IMR-90 (cell line): ENCODE measurements at regions of chr17 and their contacts with region 1.

Region 1: DNA sequence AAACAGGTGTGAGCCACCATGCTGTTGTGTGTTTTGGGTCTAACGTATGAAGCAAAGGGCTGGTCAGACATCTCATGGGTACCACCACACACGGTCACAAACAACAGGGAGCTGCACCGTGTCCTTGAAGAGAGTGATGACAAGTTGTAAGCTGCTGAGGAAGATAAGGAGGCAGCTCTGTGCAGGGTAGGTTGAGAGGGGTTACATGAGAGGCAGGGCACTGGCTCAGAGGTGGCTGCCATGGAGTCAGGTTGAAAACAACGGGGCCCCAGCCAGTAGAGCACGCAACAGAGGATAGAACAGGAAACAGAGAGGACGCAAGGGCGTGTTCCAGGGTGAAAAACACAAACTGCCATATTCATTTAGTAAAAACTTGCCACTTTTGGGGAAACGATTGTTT is 52.2 kb downstream of the TRARG1 start:
- DNase-seq: no peak
- ATAC-seq: no peak
- H3K4me3 ChIP-seq: no peak overlapping the region
- H3K27ac ChIP-seq: no peak overlapping the region
- H3K4me1 ChIP-seq: no peaks in the 10 kb centered on the region
- H3K27me3 ChIP-seq: no peaks in the 10 kb centered on the region
- CTCF ChIP-seq: no peak
- POLR2A ChIP-seq: no peak
- RAD21 ChIP-seq: no peak

Region 2: DNA sequence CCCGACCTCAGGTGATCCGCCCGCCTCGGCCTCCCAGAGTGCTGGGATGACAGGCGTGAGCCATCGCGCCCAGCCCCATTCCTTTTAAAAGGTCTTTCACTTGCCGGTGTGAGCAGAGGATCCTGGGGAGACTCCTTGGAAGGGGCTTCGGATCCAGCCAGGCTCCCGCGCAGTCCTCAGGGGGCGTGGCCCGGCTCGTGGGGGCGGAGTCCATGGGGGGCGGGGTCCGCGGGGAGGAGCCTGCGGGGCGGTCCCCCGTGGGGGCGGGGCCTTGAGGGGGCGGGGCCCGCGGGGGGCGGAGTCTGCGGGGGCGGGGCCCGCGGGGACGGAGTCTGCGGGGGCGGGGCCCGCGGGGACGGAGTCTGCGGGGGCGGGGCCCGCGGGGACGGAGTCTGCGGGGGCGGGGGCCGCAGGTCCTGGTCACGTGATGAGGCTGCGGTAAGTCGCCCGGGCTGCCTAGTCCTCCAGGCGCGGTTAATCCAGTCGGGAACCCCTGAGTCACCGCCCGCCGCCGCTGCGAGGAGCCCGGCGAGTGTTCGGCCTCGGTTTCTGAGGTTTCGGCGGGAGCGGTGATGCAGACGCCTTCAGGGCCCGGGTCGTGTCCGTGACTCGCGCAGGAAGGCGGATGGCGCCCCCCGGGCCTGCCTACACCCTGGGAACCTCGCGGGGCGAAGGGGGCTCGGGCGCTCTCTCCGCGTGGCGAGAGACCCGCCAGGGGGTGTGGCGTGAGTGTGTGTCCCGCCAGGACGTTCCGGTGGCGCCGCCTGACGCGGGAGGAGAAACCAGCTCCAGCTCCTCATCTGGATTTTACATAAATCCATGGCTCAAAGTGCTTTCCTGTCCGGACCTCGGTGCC is 128.4 kb before region 1 on chr17:
- CTCF ChIA-PET with region 1: no interaction called
- POLR2A ChIA-PET with region 1: no interaction called
- dilution Hi-C with region 1: no loop called
- in situ Hi-C with region 1: no loop called
- intact Hi-C with region 1: loop called (anchors 5 kb)
- DNase-seq: peak; percentile 51
- ATAC-seq: peak; percentile 95
- H3K4me3 ChIP-seq: peak overlapping the region; percentile 62
- H3K27ac ChIP-seq: no peak overlapping the region; the same call in 1 of the 2 replicates
- H3K4me1 ChIP-seq: no peaks in the 10 kb centered on the region
- H3K27me3 ChIP-seq: peaks cover 10% of the 10 kb centered on the region
- CTCF ChIP-seq: no peak
- POLR2A ChIP-seq: no peak
- RAD21 ChIP-seq: no peak

Region 3: DNA sequence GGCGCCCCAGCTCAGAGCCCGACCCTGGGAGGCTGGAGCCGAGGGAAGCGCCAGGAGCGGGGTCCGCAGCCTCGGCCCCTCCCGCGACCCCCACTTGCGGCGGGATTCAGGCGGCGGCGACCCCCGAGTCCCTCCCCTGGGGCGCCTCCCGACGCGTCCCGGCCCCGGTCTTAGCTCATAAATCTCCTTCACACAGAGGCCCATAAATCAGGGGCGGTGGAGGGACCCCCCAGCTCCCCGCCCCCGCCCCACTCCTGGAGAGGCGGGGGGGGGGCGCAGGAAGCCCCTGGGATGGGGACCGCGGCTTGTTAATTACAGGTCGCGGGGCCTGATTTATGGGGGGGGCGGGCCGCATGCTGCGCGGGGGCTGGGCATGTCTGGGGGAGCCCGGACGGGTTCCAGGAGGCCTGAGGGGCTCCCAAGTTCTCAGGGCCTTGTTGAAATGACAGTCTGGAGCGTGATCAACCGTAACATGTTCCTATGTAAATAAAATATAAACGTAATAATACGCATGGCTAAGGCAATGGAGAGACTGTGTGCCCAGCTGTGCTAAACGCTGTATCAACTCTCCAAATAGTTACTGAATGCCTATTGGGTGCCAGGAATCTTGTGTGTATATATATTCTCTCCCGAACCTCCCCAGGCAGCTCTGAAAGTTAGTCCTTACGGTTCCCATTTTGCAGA is 71.5 kb before region 1 on chr17:
- CTCF ChIA-PET with region 1: no interaction called
- POLR2A ChIA-PET with region 1: no interaction called
- dilution Hi-C with region 1: no loop called
- in situ Hi-C with region 1: no loop called
- intact Hi-C with region 1: loop called (anchors 1 kb)
- DNase-seq: no peak
- ATAC-seq: peak; percentile 40
- H3K4me3 ChIP-seq: peak overlapping the region; percentile 79
- H3K27ac ChIP-seq: no peak overlapping the region
- H3K4me1 ChIP-seq: no peaks in the 10 kb centered on the region
- H3K27me3 ChIP-seq: peaks cover 5% of the 10 kb centered on the region
- CTCF ChIP-seq: no peak
- POLR2A ChIP-seq: no peak
- RAD21 ChIP-seq: no peak

Region 4: GRCh38 chr17:1270210-1271010 is 61.3 kb before region 1 on chr17 and contains the start of gene BHLHA9:
- CTCF ChIA-PET with region 1: no interaction called
- POLR2A ChIA-PET with region 1: no interaction called
- dilution Hi-C with region 1: no loop called
- in situ Hi-C with region 1: loop called (anchors 5 kb)
- intact Hi-C with region 1: no loop called
- DNase-seq: no peak
- ATAC-seq: no peak
- H3K4me3 ChIP-seq: no peak within 1 kb of the TSS
- H3K27ac ChIP-seq: no peak within 1 kb of the TSS
- H3K4me1 ChIP-seq: peaks cover 3% of the 10 kb centered on the region
- H3K27me3 ChIP-seq: peaks cover 35% of the 10 kb centered on the region
- CTCF ChIP-seq: no peak
- POLR2A ChIP-seq: no peak
- RAD21 ChIP-seq: no peak
- total RNA-seq, gene BHLHA9: not detected in 2 replicates

Region 5: DNA sequence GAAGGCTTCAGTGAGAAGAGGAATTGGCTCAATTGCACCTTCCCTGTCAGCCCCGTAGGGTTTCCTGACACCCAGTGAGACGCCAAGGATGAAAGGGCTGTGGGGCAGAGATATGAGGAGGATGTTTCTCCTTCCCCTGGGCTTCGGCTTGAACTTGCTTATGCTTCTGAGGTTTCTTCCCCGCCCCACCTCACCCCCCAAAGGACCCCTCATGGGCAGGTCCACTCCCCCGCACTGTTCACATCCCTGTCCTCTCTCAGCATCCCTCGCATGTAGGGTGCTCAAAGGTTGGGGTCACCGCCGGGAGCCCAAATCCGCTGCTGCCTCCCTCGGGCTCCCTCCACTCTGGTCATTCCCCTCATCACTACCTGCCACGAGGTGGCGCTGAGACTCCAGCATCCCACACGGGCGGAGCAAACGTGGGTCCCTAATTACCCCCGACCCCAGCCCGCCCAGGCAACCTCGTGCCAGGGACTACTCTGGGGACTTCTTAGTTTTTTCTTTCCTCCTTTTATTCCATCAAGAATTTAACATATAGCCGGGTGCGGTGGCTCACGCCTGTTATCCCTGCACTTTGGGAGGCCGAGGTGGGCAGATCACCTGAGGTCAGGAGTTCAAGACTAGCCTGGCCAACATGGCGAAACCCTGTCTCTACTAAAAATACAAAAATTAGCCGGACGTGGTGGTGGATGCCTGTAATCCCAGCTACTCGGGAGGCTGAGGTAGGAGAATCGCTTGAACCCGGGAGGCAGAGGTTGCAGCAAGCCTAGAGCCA is 55.6 kb before region 1 on chr17:
- CTCF ChIA-PET with region 1: no interaction called
- POLR2A ChIA-PET with region 1: no interaction called
- dilution Hi-C with region 1: no loop called
- in situ Hi-C with region 1: loop called (anchors 5 kb)
- intact Hi-C with region 1: loop called (anchors 1 kb)
- DNase-seq: peak; percentile 27
- ATAC-seq: peak; percentile 90
- H3K4me3 ChIP-seq: no peak overlapping the region
- H3K27ac ChIP-seq: no peak overlapping the region
- H3K4me1 ChIP-seq: no peaks in the 10 kb centered on the region
- H3K27me3 ChIP-seq: peaks cover 48% of the 10 kb centered on the region
- CTCF ChIP-seq: peak; percentile 81
- POLR2A ChIP-seq: no peak
- RAD21 ChIP-seq: peak; percentile 88

Region 6: GRCh38 chr17:1312261-1312870 is 19.3 kb before region 1 on chr17:
- CTCF ChIA-PET with region 1: no interaction called
- POLR2A ChIA-PET with region 1: no interaction called
- dilution Hi-C with region 1: no loop called
- in situ Hi-C with region 1: no loop called
- intact Hi-C with region 1: no loop called
- DNase-seq: no peak
- ATAC-seq: no peak
- H3K4me3 ChIP-seq: no peak overlapping the region
- H3K27ac ChIP-seq: no peak overlapping the region
- H3K4me1 ChIP-seq: no peaks in the 10 kb centered on the region
- H3K27me3 ChIP-seq: peaks cover 16% of the 10 kb centered on the region
- CTCF ChIP-seq: no peak
- POLR2A ChIP-seq: no peak
- RAD21 ChIP-seq: no peak